ENCODE measurements at regions of chr5 and their contacts with region 1.

Region 1: GRCh38 chr5:32498484-32498883 is 53.9 kb upstream of the ZFR start:
- DNase-seq: no peak
- ATAC-seq: no peak
- H3K4me3 ChIP-seq: no peak overlapping the region
- H3K27ac ChIP-seq: no peak overlapping the region
- H3K4me1 ChIP-seq: no peaks in the 10 kb centered on the region
- H3K27me3 ChIP-seq: peaks cover 0 to 30% of the 10 kb centered on the region in 2 donors
- CTCF ChIP-seq: no peak

Region 2: DNA sequence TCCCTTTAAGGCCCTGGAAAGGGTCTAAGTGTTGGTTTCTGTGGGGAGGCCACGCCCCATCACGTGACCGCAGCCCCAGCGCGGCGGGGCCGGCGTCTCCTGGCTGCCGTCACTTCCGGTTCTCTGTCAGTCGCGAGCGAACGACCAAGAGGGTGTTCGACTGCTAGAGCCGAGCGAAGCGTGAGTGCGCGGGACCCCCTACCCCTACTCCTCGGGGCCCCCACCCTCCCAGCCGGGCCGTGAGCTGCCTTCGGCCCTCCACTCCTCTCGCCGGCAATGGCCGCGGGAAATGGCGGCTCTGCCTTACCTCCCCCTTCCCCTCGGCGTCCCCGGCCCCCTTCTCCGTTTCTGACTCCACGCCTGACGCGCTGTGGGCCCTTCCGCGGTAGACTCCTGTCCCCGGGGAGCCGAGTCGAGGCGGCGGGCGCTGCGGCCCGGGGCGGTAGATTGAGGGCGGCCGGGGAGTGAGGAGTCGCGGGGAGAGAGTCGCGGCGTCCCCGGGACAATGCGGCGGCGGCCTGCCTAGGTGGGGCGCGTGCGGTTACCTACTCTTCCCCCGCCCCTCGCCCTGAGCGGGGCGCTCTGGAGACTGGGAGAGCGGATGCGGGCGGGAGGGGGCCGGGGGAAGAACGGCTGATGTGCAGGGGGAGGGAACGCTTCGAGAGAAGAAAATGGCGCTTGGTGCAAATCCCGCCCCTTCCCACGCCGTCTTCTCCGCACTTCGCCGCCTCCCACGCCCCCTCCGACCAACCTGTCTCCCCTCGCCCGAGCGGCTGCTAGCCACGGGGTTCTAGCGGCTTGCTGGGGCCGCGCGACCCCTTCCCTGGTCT is 87.2 kb after region 1 on chr5 and contains the start of gene SUB1:
- intact Hi-C with region 1: loop called in 1 of 2 experiments (anchors 5 kb)
- DNase-seq: peak; percentile 91 to 97 (median 96)
- ATAC-seq: peak; percentile 92
- H3K4me3 ChIP-seq: peak within 1 kb of the TSS; percentile 88
- H3K27ac ChIP-seq: peak within 1 kb of the TSS; percentile 99
- H3K4me1 ChIP-seq: peaks cover 23 to 81% of the 10 kb centered on the region in 2 donors
- H3K27me3 ChIP-seq: no peaks in the 10 kb centered on the region
- CTCF ChIP-seq: no peak
- polyA plus RNA-seq, gene SUB1: 245 to 289 (median 262) TPM

Region 3: GRCh38 chr5:32703957-32704356 is 205.5 kb after region 1 on chr5:
- intact Hi-C with region 1: no loop called
- DNase-seq: no peak
- ATAC-seq: no peak
- H3K4me3 ChIP-seq: no peak overlapping the region
- H3K27ac ChIP-seq: no peak overlapping the region
- H3K4me1 ChIP-seq: peaks cover 0 to 4% of the 10 kb centered on the region in 2 donors
- H3K27me3 ChIP-seq: peaks cover under 1 to 6% of the 10 kb centered on the region in 2 donors
- CTCF ChIP-seq: no peak